ENCODE measurements at regions of chr17 and their contacts with region 1.

Region 1: GRCh38 chr17:66715745-66716156 is 119.2 kb upstream of the CACNG5 start:
- DNase-seq: peak; percentile 35 to 67
- H3K4me3 ChIP-seq: no peak overlapping the region
- H3K4me3 Mint-ChIP-seq: no peak overlapping the region
- H3K27ac Mint-ChIP-seq: no peak overlapping the region
- H3K4me1 ChIP-seq: peaks cover 10% of the 10 kb centered on the region; the same call in 1 of the 2 replicates
- H3K4me1 Mint-ChIP-seq: no peaks in the 10 kb centered on the region
- H3K27me3 ChIP-seq: no peaks in the 10 kb centered on the region
- H3K27me3 Mint-ChIP-seq: no peaks in the 10 kb centered on the region
- CTCF ChIP-seq: peak; percentile 35 to 72

Region 2: GRCh38 chr17:66900126-66901010 is 184.6 kb after region 1 on chr17:
- CTCF ChIA-PET with region 1: interaction called, 3 read pairs
- POLR2A ChIA-PET with region 1: no interaction called
- intact Hi-C with region 1: loop called (anchors 1 kb)
- DNase-seq: peak in 1 of 2 experiments; percentile 13
- H3K4me3 ChIP-seq: no peak overlapping the region
- H3K4me3 Mint-ChIP-seq: no peak overlapping the region
- H3K27ac Mint-ChIP-seq: no peak overlapping the region
- H3K4me1 ChIP-seq: no peaks in the 10 kb centered on the region
- H3K4me1 Mint-ChIP-seq: no peaks in the 10 kb centered on the region
- H3K27me3 ChIP-seq: no peaks in the 10 kb centered on the region
- H3K27me3 Mint-ChIP-seq: peaks cover 2% of the 10 kb centered on the region
- CTCF ChIP-seq: peak; percentile 31 to 49

Region 3: GRCh38 chr17:66906321-66907278 is 190.8 kb after region 1 on chr17:
- CTCF ChIA-PET with region 1: interaction called, 3 read pairs
- POLR2A ChIA-PET with region 1: no interaction called
- intact Hi-C with region 1: loop called (anchors 1 kb)
- DNase-seq: peak; percentile 66 to 75
- H3K4me3 ChIP-seq: no peak overlapping the region
- H3K4me3 Mint-ChIP-seq: no peak overlapping the region
- H3K27ac Mint-ChIP-seq: no peak overlapping the region
- H3K4me1 ChIP-seq: no peaks in the 10 kb centered on the region
- H3K4me1 Mint-ChIP-seq: no peaks in the 10 kb centered on the region
- H3K27me3 ChIP-seq: no peaks in the 10 kb centered on the region
- H3K27me3 Mint-ChIP-seq: no peaks in the 10 kb centered on the region
- CTCF ChIP-seq: peak; percentile 89 to 91

Region 4: DNA sequence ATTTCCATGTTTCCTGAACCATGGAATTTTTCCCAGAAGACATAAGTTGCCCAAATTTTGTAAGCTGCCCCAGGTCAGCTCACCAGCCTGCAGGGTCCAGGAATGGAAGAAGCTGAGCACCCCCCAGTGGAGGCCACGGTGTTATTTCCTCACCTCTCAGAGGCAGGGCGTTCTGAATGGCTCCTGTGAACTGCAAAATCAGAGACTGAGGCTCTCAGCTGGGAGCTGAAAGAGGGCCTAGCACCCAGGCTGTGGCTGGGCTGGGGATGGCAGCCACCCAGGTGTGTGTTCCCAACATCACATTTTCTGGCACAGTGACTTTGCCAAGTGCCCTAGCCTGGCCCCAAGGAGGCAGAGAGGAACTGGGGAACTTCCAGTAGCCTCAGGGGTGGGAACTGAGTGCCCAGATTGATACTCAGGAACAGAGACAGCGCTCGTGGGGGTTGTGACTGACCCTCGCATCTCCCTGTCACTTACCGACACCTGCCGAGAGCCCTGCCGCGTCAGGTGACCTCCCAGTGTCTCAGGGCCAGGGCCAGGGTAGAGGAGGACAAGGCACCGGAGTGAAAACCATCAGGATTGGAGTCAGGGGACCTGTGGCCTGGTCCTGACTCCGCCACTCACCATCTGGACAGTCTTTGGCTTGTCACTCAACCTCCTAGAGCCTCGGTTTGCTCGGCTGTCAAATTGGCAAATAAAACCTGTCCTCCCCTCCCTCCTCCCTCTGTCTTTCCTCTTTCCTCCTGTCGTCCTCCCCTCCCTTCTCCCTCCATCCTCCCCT is 260.0 kb after region 1 on chr17:
- CTCF ChIA-PET with region 1: no interaction called
- POLR2A ChIA-PET with region 1: no interaction called
- intact Hi-C with region 1: loop called (anchors 1 kb)
- DNase-seq: peak; percentile 68 to 74
- H3K4me3 ChIP-seq: no peak overlapping the region
- H3K4me3 Mint-ChIP-seq: no peak overlapping the region
- H3K27ac Mint-ChIP-seq: no peak overlapping the region
- H3K4me1 ChIP-seq: peaks cover 26% of the 10 kb centered on the region
- H3K4me1 Mint-ChIP-seq: peaks cover 13% of the 10 kb centered on the region
- H3K27me3 ChIP-seq: no peaks in the 10 kb centered on the region
- H3K27me3 Mint-ChIP-seq: no peaks in the 10 kb centered on the region
- CTCF ChIP-seq: peak; percentile 42 to 63

Region 5: GRCh38 chr17:67082107-67082506 is 366.4 kb after region 1 on chr17:
- CTCF ChIA-PET with region 1: no interaction called
- POLR2A ChIA-PET with region 1: no interaction called
- intact Hi-C with region 1: loop called (anchors 10 kb)
- DNase-seq: no peak
- H3K4me3 ChIP-seq: no peak overlapping the region
- H3K4me3 Mint-ChIP-seq: no peak overlapping the region
- H3K27ac Mint-ChIP-seq: no peak overlapping the region
- H3K4me1 ChIP-seq: peaks cover 1% of the 10 kb centered on the region; the same call in 1 of the 2 replicates
- H3K4me1 Mint-ChIP-seq: peaks cover 7% of the 10 kb centered on the region
- H3K27me3 ChIP-seq: no peaks in the 10 kb centered on the region
- H3K27me3 Mint-ChIP-seq: no peaks in the 10 kb centered on the region
- CTCF ChIP-seq: peak in 1 of 2 experiments; percentile 14

Region 6: DNA sequence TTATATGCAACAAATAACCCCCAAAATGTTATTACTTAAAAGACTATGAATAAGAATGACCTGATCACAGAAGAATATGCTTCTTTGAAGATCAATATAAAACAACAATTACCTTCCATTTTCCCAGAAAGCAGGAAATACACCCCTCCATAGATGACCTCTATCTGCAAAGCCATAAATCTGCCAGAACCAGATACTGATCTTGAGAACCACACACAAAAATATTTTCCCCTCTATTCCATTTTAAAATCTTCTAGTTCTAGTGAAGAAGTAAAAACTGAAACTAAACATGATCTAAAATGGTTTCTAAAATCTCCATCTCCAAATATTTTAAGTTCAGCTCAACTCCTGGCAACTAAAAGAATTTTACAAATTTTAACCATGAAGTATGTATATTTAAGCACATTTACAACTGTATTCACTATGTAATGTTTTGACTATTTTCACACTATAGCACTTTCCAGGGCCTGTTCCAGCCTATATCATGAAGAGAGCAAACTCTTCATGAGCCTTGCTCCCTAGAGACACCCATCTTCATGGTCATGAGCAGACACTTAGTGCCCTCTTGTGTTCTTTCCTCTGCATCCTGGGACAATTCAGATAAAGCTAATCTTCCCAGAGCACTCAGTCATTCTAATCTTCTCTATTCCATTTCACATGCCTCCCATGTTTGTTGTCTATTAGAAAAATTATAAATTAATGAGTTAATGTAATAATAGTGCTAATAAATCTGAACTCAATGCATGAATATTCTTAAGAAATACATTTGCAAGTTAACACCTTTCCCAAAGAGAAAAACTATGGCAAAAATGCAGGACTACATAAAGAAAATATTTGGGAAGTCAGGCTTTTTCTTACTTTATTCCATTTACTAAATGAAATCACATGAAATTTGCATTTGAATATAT is 442.2 kb after region 1 on chr17:
- CTCF ChIA-PET with region 1: no interaction called
- POLR2A ChIA-PET with region 1: no interaction called
- intact Hi-C with region 1: loop called (anchors 1 kb)
- DNase-seq: peak in 1 of 2 experiments; percentile 36
- H3K4me3 ChIP-seq: no peak overlapping the region
- H3K4me3 Mint-ChIP-seq: no peak overlapping the region
- H3K27ac Mint-ChIP-seq: no peak overlapping the region
- H3K4me1 ChIP-seq: 0 out of 2 replicates have a peak, but pooled peaks cover 4% of the 10 kb centered on the region
- H3K4me1 Mint-ChIP-seq: no peaks in the 10 kb centered on the region
- H3K27me3 ChIP-seq: no peaks in the 10 kb centered on the region
- H3K27me3 Mint-ChIP-seq: no peaks in the 10 kb centered on the region
- CTCF ChIP-seq: peak in 1 of 2 experiments; percentile 39